ENCODE measurements at regions of chr1 and their contacts with region 1.

Region 1: DNA sequence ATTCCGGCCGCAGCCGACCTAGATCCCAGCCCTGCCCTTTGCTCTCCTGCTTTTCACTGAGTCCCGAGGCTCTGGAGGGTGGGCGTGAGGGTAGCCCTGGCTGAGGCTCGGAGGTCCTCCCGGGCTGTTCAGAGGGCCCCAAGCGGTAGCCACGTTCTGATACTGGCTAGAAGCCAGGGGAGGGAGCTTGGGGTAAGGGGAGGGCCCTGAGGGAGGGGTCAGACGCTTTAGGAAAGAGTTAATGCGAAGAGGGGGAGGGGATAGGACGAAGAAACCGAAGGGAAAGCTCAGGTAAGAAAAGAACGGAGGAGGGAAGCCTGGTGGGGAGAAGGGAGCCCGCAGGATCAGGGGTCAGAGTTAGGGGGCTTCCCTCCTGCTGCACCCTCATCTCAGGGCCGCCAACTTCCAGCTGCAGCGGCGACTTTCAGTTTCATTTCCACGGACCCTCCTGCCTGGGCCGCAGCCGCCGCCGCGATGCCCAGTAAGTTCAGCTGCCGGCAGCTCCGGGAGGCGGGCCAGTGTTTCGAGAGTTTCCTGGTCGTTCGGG is at the start of gene MOV10:
- H3K4me3 Mint-ChIP-seq: peak within 1 kb of the TSS; percentile 100
- H3K27ac Mint-ChIP-seq: peak within 1 kb of the TSS; percentile 100
- H3K4me1 Mint-ChIP-seq: peaks cover 34% of the 10 kb centered on the region
- H3K27me3 Mint-ChIP-seq: peaks cover 9% of the 10 kb centered on the region

Region 2: DNA sequence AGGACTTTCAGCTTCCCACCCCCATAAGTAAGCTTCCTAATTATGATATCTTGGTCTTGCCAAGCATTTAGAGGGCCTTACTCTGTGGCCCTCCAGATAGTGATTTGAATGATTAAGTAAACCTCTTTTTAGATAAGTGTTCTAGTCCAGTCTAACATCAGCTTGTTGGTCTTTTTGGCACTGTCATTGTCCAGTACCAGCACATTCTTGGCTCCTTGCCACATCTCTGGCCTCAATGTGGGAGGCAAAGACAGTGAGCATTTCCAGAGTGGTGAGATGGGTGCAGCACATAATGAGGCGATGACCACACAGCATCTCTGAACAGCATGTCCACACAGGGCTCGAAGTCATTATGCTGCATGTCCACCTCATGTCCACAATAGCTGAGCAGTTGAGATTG is 48.8 kb before region 1 on chr1:
- intact Hi-C with region 1: loop called (anchors 5 kb)
- H3K4me3 Mint-ChIP-seq: no peak overlapping the region
- H3K27ac Mint-ChIP-seq: no peak overlapping the region
- H3K4me1 Mint-ChIP-seq: peaks cover 50% of the 10 kb centered on the region
- H3K27me3 Mint-ChIP-seq: no peaks in the 10 kb centered on the region

Measured in dendritic cell treated with granulocyte-macrophage colony-stimulating factor and Interleukin-4, amounts not matched to agents 40 ng/mL and 50 ng/mL, for 4 days (primary cell).